Caco-2 (cell line): ENCODE measurements at regions of chr5 and their contacts with region 1.

Region 1: GRCh38 chr5:172707285-172708182 is 63.5 kb downstream of the DUSP1 start:
- DNase-seq: peak; percentile 73 to 75
- H3K4me3 ChIP-seq: no peak overlapping the region
- H3K4me3 Mint-ChIP-seq: no peak overlapping the region
- H3K27ac Mint-ChIP-seq: no peak overlapping the region
- H3K4me1 ChIP-seq: no peaks in the 10 kb centered on the region
- H3K4me1 Mint-ChIP-seq: no peaks in the 10 kb centered on the region
- H3K27me3 ChIP-seq: no peaks in the 10 kb centered on the region
- H3K27me3 Mint-ChIP-seq: no peaks in the 10 kb centered on the region
- CTCF ChIP-seq: peak; percentile 59 to 86

Region 2: GRCh38 chr5:172322028-172322965 is 385.2 kb before region 1 on chr5:
- CTCF ChIA-PET with region 1: no interaction called
- POLR2A ChIA-PET with region 1: no interaction called
- intact Hi-C with region 1: no loop called
- DNase-seq: no peak
- H3K4me3 ChIP-seq: no peak overlapping the region
- H3K4me3 Mint-ChIP-seq: no peak overlapping the region
- H3K27ac Mint-ChIP-seq: no peak overlapping the region
- H3K4me1 ChIP-seq: 0 out of 2 replicates have a peak, but pooled peaks cover 5% of the 10 kb centered on the region
- H3K4me1 Mint-ChIP-seq: no peaks in the 10 kb centered on the region
- H3K27me3 ChIP-seq: no peaks in the 10 kb centered on the region
- H3K27me3 Mint-ChIP-seq: no peaks in the 10 kb centered on the region
- CTCF ChIP-seq: no peak

Region 3: DNA sequence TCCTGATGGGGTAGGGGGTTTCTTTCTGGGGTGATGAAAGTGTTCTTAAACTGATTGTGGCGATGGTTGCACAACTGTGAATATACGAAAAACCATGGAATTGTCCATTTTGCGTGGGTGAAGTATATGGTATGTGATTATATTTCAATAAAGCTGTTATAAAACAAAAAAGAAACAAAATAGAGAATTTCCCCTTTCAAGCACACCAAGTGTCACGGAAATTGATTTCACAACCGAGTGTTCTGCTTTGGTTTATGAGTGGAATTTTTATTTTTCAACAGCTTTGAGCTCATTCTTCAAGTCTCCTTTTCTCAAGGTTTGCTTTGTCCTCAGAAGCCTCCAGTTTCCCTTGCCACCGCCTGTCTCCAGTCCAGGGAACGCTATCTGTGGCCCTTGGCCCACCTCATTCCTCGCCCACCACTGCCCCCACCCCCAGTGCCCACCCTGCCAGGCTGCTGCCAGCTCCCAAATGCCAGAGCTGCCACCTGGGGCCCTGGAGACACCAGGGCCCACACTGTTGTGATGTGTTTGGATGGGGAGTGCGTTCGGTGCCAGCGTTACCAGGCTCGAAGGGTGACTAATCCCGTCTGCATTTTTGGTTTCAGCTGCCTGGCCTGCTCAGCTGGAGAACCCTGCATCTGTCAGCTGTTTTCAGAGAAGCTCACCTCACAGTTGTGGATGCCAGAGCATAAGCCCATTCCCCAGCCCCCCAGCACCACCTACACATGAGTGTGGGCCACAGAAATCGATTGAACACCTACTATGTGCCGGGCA is 33.1 kb after region 1 on chr5:
- CTCF ChIA-PET with region 1: no interaction called
- POLR2A ChIA-PET with region 1: no interaction called
- intact Hi-C with region 1: no loop called
- DNase-seq: no peak
- H3K4me3 ChIP-seq: no peak overlapping the region
- H3K4me3 Mint-ChIP-seq: no peak overlapping the region
- H3K27ac Mint-ChIP-seq: no peak overlapping the region
- H3K4me1 ChIP-seq: peaks cover 7% of the 10 kb centered on the region; the same call in 1 of the 2 replicates
- H3K4me1 Mint-ChIP-seq: peaks cover 6% of the 10 kb centered on the region
- H3K27me3 ChIP-seq: no peaks in the 10 kb centered on the region
- H3K27me3 Mint-ChIP-seq: no peaks in the 10 kb centered on the region
- CTCF ChIP-seq: no peak

Region 4: DNA sequence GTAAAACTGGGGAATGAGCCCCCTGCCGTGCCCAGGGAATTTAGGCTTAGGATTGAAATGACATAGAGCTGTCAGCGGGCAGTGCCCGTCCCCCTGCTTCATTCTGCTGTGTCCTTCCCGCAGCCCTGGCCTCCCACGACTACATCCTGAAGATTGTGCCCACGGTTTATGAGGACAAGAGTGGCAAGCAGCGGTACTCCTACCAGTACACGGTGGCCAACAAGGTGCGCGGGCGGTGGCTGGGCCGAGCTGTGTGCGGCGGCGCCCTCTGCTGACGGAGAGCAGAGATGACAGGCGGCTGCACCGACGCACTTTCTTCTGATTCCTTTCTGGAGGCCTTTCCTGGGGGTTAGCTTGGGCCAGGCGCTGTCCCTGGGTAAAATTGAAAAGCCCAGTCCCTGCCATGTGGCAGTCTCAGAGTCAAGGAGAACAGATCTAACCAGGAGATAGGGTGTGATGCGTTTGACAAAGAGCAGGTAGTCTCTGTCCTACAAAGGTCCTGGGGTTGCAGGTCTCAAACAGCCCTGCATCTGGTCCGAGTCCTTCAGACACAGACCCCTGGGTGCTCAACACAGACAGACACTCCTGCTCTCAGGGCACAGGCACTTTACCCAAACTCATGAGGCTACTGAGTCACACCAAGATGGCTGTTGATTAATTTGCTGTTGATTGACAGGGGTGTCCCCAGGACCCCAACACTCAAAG is 224.9 kb after region 1 on chr5:
- CTCF ChIA-PET with region 1: interaction called, 31 read pairs
- POLR2A ChIA-PET with region 1: no interaction called
- intact Hi-C with region 1: no loop called
- DNase-seq: peak; percentile 58 to 67
- H3K4me3 ChIP-seq: no peak overlapping the region
- H3K4me3 Mint-ChIP-seq: no peak overlapping the region
- H3K27ac Mint-ChIP-seq: no peak overlapping the region
- H3K4me1 ChIP-seq: no peaks in the 10 kb centered on the region
- H3K4me1 Mint-ChIP-seq: no peaks in the 10 kb centered on the region
- H3K27me3 ChIP-seq: no peaks in the 10 kb centered on the region
- H3K27me3 Mint-ChIP-seq: no peaks in the 10 kb centered on the region
- CTCF ChIP-seq: peak; percentile 77 to 92

Region 5: DNA sequence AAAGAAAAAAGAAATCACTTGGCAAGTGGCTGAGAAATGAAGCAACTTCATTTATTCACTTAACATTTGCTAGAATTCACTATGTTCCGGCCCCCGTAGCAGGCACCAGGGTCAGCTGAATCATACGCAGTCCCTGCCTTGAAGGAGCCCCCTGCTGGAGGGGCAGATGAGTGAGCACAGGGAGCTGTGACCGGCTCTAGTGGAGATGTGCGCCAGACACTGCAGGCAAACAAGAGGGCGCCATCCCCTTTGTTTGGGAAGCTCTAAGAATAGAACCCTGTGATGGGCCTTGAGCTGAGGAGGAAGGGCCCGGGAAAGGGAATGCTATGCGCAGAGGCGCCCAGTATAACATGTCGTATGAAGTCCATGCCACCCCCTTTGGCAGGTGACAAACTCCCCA is 231.5 kb after region 1 on chr5:
- CTCF ChIA-PET with region 1: interaction called, 31 read pairs
- POLR2A ChIA-PET with region 1: no interaction called
- intact Hi-C with region 1: no loop called
- DNase-seq: peak; percentile 58 to 66
- H3K4me3 ChIP-seq: no peak overlapping the region
- H3K4me3 Mint-ChIP-seq: no peak overlapping the region
- H3K27ac Mint-ChIP-seq: no peak overlapping the region
- H3K4me1 ChIP-seq: no peaks in the 10 kb centered on the region
- H3K4me1 Mint-ChIP-seq: no peaks in the 10 kb centered on the region
- H3K27me3 ChIP-seq: no peaks in the 10 kb centered on the region
- H3K27me3 Mint-ChIP-seq: no peaks in the 10 kb centered on the region
- CTCF ChIP-seq: peak; percentile 42 to 50

Region 6: GRCh38 chr5:172958331-172959046 is 251.0 kb after region 1 on chr5:
- CTCF ChIA-PET with region 1: interaction called, 11 read pairs
- POLR2A ChIA-PET with region 1: no interaction called
- intact Hi-C with region 1: no loop called
- DNase-seq: peak; percentile 75 to 76
- H3K4me3 ChIP-seq: peak overlapping the region; percentile 96
- H3K4me3 Mint-ChIP-seq: peak overlapping the region; percentile 100
- H3K27ac Mint-ChIP-seq: peak overlapping the region; percentile 98
- H3K4me1 ChIP-seq: peaks cover 15% of the 10 kb centered on the region
- H3K4me1 Mint-ChIP-seq: peaks cover 7% of the 10 kb centered on the region
- H3K27me3 ChIP-seq: no peaks in the 10 kb centered on the region
- H3K27me3 Mint-ChIP-seq: no peaks in the 10 kb centered on the region
- CTCF ChIP-seq: no peak

Region 7: GRCh38 chr5:172984243-172984953 is 276.9 kb after region 1 on chr5:
- CTCF ChIA-PET with region 1: interaction called, 14 read pairs
- POLR2A ChIA-PET with region 1: no interaction called
- intact Hi-C with region 1: no loop called
- DNase-seq: peak; percentile 78 to 79
- H3K4me3 ChIP-seq: peak overlapping the region; percentile 94
- H3K4me3 Mint-ChIP-seq: peak overlapping the region; percentile 87
- H3K27ac Mint-ChIP-seq: peak overlapping the region; percentile 95
- H3K4me1 ChIP-seq: peaks cover 11% of the 10 kb centered on the region
- H3K4me1 Mint-ChIP-seq: peaks cover 7% of the 10 kb centered on the region
- H3K27me3 ChIP-seq: no peaks in the 10 kb centered on the region
- H3K27me3 Mint-ChIP-seq: no peaks in the 10 kb centered on the region
- CTCF ChIP-seq: peak; percentile 33 to 72

Region 8: GRCh38 chr5:173283318-173284288 is 576.1 kb after region 1 on chr5:
- CTCF ChIA-PET with region 1: interaction called, 3 read pairs
- POLR2A ChIA-PET with region 1: no interaction called
- intact Hi-C with region 1: loop called (anchors 2 kb)
- DNase-seq: peak; percentile 91 to 94
- H3K4me3 ChIP-seq: peak overlapping the region; percentile 46
- H3K4me3 Mint-ChIP-seq: peak overlapping the region; percentile 73
- H3K27ac Mint-ChIP-seq: no peak overlapping the region
- H3K4me1 ChIP-seq: peaks cover 8% of the 10 kb centered on the region; the same call in 1 of the 2 replicates
- H3K4me1 Mint-ChIP-seq: peaks cover 8% of the 10 kb centered on the region
- H3K27me3 ChIP-seq: no peaks in the 10 kb centered on the region
- H3K27me3 Mint-ChIP-seq: peaks cover 15% of the 10 kb centered on the region
- CTCF ChIP-seq: peak; percentile 91 to 92